Activated B cell treated with CpG ODN at 0.5 μM for 24 hours (primary cell): ENCODE measurements at regions of chr17 and their contacts with region 1.

Region 1: DNA sequence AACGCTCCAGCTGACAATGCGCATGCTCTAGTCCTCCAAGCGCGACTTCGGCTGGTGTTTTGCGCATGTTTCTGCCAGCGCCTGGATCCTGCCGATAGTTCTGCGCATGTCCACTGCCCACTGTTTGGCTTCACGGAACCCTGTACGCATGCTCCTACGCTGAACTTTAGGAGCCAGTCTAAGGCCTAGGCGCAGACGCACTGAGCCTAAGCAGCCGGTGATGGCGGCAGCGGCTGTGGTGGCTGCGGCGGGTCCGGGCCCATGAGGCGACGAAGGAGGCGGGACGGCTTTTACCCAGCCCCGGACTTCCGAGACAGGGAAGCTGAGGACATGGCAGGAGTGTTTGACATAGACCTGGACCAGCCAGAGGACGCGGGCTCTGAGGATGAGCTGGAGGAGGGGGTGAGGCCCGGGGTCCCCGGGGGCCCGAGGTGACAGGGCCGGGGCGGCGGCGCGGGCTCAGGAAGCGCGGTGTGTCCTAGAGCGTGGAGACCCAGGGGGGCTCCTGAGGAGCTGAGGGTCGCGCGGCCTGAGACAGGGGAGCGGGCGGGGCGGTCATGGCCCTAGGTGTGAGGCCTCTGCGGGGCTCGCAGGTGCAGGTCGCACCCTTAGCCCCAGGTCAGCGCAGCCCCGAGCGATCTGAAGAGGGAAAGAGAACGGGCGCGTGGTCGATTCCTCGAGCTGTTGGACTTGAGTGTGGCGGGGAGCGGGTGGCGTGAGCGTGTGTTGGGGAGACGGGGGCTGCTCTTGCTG is at the starts of genes RPS6KB1 and TUBD1:
- DNase-seq: peak; percentile 86
- ATAC-seq: peak; percentile 91
- H3K4me3 Mint-ChIP-seq: peak within 1 kb of the TSS; percentile 99
- H3K27ac Mint-ChIP-seq: peak within 1 kb of the TSS; percentile 98
- H3K4me1 Mint-ChIP-seq: peaks cover 44% of the 10 kb centered on the region
- H3K27me3 Mint-ChIP-seq: no peaks in the 10 kb centered on the region
- CTCF ChIP-seq: no peak
- total RNA-seq, gene RPS6KB1: 57.7 and 63.0 TPM in 2 replicates
- total RNA-seq, gene TUBD1: 10.5 and 15.1 TPM in 2 replicates

Region 2: GRCh38 chr17:59707114-59707970 is 185.8 kb before region 1 on chr17 and contains the starts of genes PTRH2 and VMP1:
- CTCF ChIA-PET with region 1: interaction called, 3 read pairs
- POLR2A ChIA-PET with region 1: interaction called, 13 read pairs
- intact Hi-C with region 1: loop called (anchors 1 kb)
- DNase-seq: peak; percentile 79
- ATAC-seq: peak; percentile 95
- H3K4me3 Mint-ChIP-seq: peak within 1 kb of the TSS; percentile 99
- H3K27ac Mint-ChIP-seq: peak within 1 kb of the TSS; percentile 97
- H3K4me1 Mint-ChIP-seq: peaks cover 72% of the 10 kb centered on the region
- H3K27me3 Mint-ChIP-seq: no peaks in the 10 kb centered on the region
- CTCF ChIP-seq: no peak
- total RNA-seq, gene PTRH2: 27.0 and 29.9 TPM in 2 replicates
- total RNA-seq, gene VMP1: 158 and 176 TPM in 2 replicates

Region 3: GRCh38 chr17:59964482-59965328 is 71.6 kb after region 1 on chr17 and contains the start of gene RNFT1:
- CTCF ChIA-PET with region 1: no interaction called
- POLR2A ChIA-PET with region 1: interaction called, 11 read pairs
- intact Hi-C with region 1: loop called (anchors 1 kb)
- DNase-seq: peak; percentile 90
- ATAC-seq: peak; percentile 89
- H3K4me3 Mint-ChIP-seq: peak within 1 kb of the TSS; percentile 90
- H3K27ac Mint-ChIP-seq: peak within 1 kb of the TSS; percentile 94
- H3K4me1 Mint-ChIP-seq: peaks cover 19% of the 10 kb centered on the region
- H3K27me3 Mint-ChIP-seq: no peaks in the 10 kb centered on the region
- CTCF ChIP-seq: no peak
- total RNA-seq, gene RNFT1: 29.0 and 29.1 TPM in 2 replicates